Activated CD8-positive, alpha-beta T cell treated with anti-CD3 and anti-CD28 coated beads for 36 hours (primary cell): ENCODE measurements at regions of chr10 and their contacts with region 1.

Region 1: DNA sequence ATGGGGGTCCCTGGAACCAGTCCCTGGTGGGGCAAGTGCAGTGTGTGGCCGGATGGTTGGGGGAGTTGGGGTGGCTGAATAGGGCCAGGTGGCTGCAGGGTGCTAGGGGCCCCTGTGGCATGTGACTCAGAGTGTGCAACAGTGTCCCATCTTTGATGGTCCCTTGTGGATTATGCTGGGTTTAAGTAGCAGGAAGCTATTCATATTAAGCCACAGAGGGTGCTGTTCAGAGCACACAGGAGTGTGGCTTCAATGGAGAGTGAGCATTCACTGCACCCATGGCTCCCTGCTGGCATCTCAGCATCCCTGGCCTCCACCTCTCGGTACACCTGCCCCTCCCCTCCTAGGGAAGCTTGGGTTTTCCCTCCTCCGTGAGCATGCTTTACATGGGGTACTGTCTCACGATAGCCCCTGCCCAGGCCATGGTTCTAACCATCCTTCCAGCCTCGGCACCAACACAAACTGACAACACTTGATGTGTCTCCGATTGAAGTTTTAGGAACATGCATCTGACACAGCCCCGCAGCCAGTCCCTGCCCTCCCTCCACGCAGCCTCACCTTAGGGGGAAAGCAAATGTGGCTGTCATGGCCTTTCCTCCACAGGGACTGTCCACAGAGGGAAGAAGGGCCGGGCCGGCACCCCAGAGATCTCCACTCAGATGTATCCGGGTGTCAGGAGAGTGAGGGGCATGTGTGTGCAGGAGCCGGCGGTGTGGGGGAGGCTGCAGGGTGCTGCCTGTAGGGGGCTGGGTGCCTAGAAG is 30.4 kb upstream of the PPIF start:
- DNase-seq: peak; percentile 63
- ATAC-seq: peak; percentile 62
- H3K4me3 Mint-ChIP-seq: peak overlapping the region; percentile 55
- H3K27ac Mint-ChIP-seq: peak overlapping the region; percentile 83
- H3K4me1 Mint-ChIP-seq: peaks cover 62% of the 10 kb centered on the region
- H3K27me3 Mint-ChIP-seq: no peaks in the 10 kb centered on the region
- CTCF ChIP-seq: no peak

Region 2: GRCh38 chr10:79331709-79332108 is 14.9 kb after region 1 on chr10:
- CTCF ChIA-PET with region 1: interaction called, 17 read pairs
- POLR2A ChIA-PET with region 1: interaction called, 7 read pairs
- intact Hi-C with region 1: no loop called
- DNase-seq: peak; percentile 94
- ATAC-seq: peak; percentile 97
- H3K4me3 Mint-ChIP-seq: no peak overlapping the region
- H3K27ac Mint-ChIP-seq: peak overlapping the region; percentile 83
- H3K4me1 Mint-ChIP-seq: peaks cover 38% of the 10 kb centered on the region
- H3K27me3 Mint-ChIP-seq: no peaks in the 10 kb centered on the region
- CTCF ChIP-seq: no peak

Region 3: DNA sequence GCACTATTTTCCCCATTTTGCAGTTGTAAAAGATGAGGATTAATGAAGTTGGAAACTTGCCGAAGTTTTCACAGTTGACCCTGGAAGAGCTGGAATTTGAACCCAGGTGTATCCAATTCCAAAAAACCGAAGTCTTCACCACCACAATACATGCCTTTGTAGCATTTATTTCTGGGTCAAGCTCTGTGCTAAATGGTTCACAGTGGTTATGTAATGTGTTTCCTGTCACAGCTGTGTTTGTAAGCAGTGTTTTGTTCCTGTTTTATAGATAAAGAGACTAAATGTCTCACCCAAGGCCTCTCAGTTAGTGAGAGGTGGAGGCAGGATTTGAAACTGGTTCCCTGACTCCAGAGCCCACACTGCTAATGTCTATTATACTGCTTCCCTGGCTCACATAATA is 225.8 kb after region 1 on chr10:
- CTCF ChIA-PET with region 1: no interaction called
- POLR2A ChIA-PET with region 1: no interaction called
- intact Hi-C with region 1: no loop called
- DNase-seq: no peak
- ATAC-seq: no peak
- H3K4me3 Mint-ChIP-seq: no peak overlapping the region
- H3K27ac Mint-ChIP-seq: no peak overlapping the region
- H3K4me1 Mint-ChIP-seq: peaks cover 2% of the 10 kb centered on the region
- H3K27me3 Mint-ChIP-seq: no peaks in the 10 kb centered on the region
- CTCF ChIP-seq: no peak